Activated T-helper 1 cell treated with anti-CD3 and anti-CD28 coated beads, Interleukin-12 subunit alpha, Interleukin-12 subunit beta, Interleukin-2, Interleukin-4 antibody, amounts not matched to agents 30 ng/mL and 10 ng/mL and 1 ng/mL, durations not matched to agents 14 hours and 24 hours and 36 hours (primary cell): ENCODE measurements at regions of chr1 and their contacts with region 1.

Region 1: DNA sequence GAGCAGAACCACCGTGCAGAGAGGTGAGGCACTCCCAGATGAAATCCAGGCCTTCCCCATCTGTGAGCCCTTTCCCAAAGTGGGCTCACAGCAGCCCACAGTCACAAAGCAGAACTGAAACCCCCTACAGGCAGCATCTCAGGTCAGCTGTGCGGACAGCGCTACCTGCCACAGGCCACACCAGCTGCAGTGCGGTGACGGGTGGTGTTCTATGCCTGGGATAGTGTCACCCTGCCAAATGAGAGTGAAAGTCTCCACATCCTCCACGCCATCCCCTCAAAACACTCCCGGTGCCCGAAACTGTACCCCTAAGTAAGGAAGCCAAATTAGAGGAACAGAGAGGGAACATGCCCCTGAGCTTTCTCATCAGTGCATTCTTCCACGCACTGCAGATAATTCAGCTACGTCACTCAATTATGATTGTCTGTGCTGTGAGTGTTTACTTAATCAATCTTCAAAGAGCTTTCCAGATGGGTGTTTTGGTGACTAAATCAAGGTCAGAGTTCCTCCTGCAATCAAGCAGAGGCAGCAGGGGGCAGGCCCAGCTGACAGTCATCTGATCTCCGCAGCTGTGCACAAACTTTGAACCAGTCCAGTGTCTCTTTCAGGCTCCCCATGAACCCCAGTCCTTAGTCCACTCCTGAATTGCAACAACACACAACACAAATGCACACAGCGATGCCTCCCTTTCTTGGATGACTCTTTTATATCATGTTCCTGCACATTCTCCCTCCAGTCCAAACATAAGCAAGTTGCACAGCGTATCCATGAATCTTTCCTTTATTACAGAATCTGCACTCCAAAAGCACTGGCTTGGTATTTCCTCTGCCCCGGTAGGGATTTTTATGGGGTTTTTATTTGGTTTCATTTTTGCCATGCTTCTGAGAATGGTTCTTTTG is 150.0 kb downstream of the TOMM20 start:
- DNase-seq: no peak
- H3K4me3 Mint-ChIP-seq: peak overlapping the region; percentile 83
- H3K27ac Mint-ChIP-seq: peak overlapping the region; percentile 92
- H3K4me1 Mint-ChIP-seq: peaks cover 88% of the 10 kb centered on the region
- H3K27me3 Mint-ChIP-seq: no peaks in the 10 kb centered on the region

Region 2: DNA sequence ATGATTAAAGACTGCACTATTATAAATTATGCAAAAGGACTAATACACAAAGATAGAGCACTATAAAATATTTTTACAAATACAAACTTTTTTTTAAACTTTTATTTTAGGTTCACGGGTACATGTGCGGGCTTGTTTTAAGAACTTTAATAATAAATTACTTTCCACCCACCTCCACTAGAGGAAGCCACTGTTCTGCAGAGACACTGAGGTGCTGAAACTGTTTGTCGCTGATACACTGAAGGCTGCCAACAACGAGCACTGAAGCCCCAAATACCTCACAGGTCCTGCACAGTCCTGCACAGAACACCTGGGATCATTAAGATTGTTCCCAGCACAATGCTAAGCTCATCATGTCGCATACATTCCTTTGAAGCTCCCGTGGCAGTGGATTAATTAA is 585.5 kb before region 1 on chr1:
- intact Hi-C with region 1: no loop called
- DNase-seq: no peak
- H3K4me3 Mint-ChIP-seq: no peak overlapping the region
- H3K27ac Mint-ChIP-seq: no peak overlapping the region
- H3K4me1 Mint-ChIP-seq: peaks cover 10% of the 10 kb centered on the region
- H3K27me3 Mint-ChIP-seq: peaks cover 2% of the 10 kb centered on the region

Region 3: GRCh38 chr1:234599617-234600417 is 378.8 kb before region 1 on chr1:
- intact Hi-C with region 1: loop called (anchors 2 kb)
- DNase-seq: peak; percentile 69
- H3K4me3 Mint-ChIP-seq: peak overlapping the region; percentile 88
- H3K27ac Mint-ChIP-seq: peak overlapping the region; percentile 96
- H3K4me1 Mint-ChIP-seq: peaks cover 56% of the 10 kb centered on the region
- H3K27me3 Mint-ChIP-seq: no peaks in the 10 kb centered on the region

Region 4: DNA sequence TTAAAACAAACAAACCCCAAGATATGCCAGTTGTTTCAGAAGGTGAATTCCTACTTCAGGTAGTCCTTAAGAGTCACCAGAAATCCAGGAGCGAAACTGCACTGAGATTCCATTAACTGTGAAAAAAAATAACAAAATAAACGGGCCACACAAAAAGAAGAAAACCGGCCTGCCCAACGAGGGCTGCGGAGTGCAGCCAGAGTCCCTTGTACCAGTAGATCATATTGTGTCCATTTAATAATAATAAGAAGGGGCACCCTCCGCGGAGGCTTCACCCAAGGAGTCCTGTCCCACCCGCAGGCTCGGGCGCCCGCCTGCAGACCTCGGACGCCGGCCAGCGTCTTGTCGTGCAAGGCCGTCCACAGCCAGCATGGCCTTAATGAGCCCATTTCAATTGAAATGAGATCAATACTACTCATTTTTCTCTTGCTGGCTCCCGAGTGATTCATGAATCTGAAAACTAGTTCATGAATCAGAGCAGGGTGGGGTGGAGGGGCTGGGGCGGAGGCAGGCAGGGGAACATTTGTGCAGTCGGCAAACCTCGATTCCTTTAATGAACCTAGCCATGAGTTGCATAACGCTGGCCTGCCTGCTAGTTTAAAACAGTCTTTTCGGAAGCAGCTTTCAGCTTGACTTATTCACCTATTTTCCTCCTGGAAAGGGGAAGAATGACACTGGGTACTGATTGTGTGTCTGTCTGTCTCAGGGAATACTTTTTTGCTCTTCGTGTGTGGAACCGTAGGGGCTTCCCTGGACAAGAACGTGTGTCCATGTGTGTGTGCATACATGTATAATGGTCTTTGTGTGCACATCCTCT is 255.5 kb before region 1 on chr1:
- intact Hi-C with region 1: loop called (anchors 1 kb)
- DNase-seq: peak; percentile 7
- H3K4me3 Mint-ChIP-seq: peak overlapping the region; percentile 70
- H3K27ac Mint-ChIP-seq: peak overlapping the region; percentile 97
- H3K4me1 Mint-ChIP-seq: peaks cover 79% of the 10 kb centered on the region
- H3K27me3 Mint-ChIP-seq: peaks cover 5% of the 10 kb centered on the region

Region 5: DNA sequence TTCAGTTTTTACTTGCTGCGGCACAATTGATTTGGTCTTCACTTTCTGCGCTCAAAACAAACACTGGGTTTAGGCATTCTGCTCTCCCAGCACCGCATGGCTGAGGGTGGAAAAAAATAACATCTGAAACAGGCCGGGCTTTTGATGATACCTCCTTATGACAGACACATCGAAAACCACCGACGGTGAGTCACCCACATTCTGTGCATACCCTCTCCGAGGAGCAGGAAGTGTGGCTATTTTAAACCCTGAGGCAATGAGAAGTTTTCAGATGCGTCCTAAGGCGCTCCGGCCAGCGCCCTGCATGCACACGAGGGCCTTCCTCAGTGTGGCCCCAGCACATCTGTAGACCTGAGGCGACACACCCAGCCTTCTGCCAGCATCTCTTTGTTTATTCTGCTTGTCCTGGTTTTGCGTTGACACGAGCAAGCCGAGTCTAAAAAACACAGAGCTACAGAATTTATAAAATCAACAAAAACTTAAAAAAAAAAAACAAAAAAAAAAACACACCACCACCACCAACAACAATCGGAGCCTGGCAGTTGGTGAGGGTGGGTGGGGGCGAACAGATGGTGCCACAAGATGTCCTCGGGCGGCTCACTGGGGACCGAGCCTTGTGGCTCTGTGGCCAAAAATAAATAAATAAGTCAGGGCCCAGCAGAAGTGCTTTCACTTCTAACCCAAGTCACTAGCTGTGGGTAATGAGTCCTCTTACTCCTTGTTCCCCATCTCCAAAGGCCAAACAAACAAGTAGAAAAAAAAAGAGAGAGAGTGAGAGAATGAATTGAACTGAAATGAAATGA is 206.1 kb before region 1 on chr1:
- intact Hi-C with region 1: loop called (anchors 2 kb)
- DNase-seq: peak; percentile 83
- H3K4me3 Mint-ChIP-seq: peak overlapping the region; percentile 80
- H3K27ac Mint-ChIP-seq: peak overlapping the region; percentile 100
- H3K4me1 Mint-ChIP-seq: peaks cover 56% of the 10 kb centered on the region
- H3K27me3 Mint-ChIP-seq: no peaks in the 10 kb centered on the region

Region 6: DNA sequence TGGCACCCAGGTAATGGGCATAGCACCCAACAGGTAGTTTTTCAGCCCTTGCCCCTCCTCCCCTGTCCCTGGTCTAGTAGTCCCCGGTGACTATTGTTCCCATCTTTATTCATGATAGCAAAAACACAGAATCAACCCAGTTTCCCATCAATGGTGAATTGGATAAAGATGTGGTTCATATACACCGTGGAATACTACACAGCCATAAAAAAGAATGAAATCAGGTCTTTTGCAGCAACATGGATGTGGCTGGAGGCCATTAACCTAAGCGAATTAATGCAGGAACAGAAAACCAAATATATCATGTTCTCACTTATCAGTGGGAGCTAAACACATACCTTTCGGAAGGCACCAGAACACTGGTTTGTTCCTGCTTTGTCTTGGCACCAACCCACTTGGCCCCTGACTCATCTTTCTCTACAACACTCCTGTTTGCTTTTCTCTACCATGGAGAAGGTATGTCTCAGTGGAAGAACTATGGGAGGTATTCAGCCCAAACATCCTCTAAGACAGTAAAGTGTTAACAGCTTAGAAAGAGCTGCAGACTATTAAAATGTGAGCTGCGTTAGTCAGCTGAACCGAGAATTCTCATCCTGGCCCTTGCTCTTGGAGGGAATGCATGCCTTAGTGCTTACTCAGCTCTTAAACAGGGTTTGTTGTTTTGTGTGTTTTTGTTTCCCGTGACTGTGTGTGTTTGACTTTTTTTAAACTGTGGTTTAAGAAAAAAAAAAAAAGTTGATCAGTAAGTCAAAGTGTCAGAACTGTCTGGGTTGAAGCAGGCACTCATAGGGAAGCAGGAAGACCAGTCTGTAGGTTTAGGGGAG is 53.0 kb before region 1 on chr1:
- intact Hi-C with region 1: loop called (anchors 2 kb)
- DNase-seq: peak; percentile 17
- H3K4me3 Mint-ChIP-seq: peak overlapping the region; percentile 74
- H3K27ac Mint-ChIP-seq: peak overlapping the region; percentile 97
- H3K4me1 Mint-ChIP-seq: peaks cover 64% of the 10 kb centered on the region
- H3K27me3 Mint-ChIP-seq: no peaks in the 10 kb centered on the region

Region 7: GRCh38 chr1:234944439-234945344 is 34.0 kb before region 1 on chr1:
- intact Hi-C with region 1: no loop called
- DNase-seq: no peak
- H3K4me3 Mint-ChIP-seq: no peak overlapping the region
- H3K27ac Mint-ChIP-seq: peak overlapping the region; percentile 83
- H3K4me1 Mint-ChIP-seq: peaks cover 12% of the 10 kb centered on the region
- H3K27me3 Mint-ChIP-seq: no peaks in the 10 kb centered on the region

Region 8: GRCh38 chr1:235050911-235051360 is 72.3 kb after region 1 on chr1:
- intact Hi-C with region 1: loop called (anchors 2 kb)
- DNase-seq: no peak
- H3K4me3 Mint-ChIP-seq: no peak overlapping the region
- H3K27ac Mint-ChIP-seq: peak overlapping the region; percentile 78
- H3K4me1 Mint-ChIP-seq: peaks cover 49% of the 10 kb centered on the region
- H3K27me3 Mint-ChIP-seq: no peaks in the 10 kb centered on the region